ENCODE measurements at regions of chr10 and their contacts with region 1.

Region 1: GRCh38 chr10:122267849-122268737 is 3.0 kb upstream of the BTBD16 start:
- DNase-seq: peak; percentile 86
- H3K4me3 ChIP-seq: no peak overlapping the region; a peak in 1 of 4 replicates
- H3K27ac ChIP-seq: no peak overlapping the region
- H3K4me1 ChIP-seq: no peaks in the 10 kb centered on the region; a peak in 1 of 4 replicates
- H3K27me3 ChIP-seq: no peaks in the 10 kb centered on the region
- CTCF ChIP-seq: peak; percentile 91
- EP300 ChIP-seq: no peak
- RAD21 ChIP-seq: peak; percentile 61

Region 2: DNA sequence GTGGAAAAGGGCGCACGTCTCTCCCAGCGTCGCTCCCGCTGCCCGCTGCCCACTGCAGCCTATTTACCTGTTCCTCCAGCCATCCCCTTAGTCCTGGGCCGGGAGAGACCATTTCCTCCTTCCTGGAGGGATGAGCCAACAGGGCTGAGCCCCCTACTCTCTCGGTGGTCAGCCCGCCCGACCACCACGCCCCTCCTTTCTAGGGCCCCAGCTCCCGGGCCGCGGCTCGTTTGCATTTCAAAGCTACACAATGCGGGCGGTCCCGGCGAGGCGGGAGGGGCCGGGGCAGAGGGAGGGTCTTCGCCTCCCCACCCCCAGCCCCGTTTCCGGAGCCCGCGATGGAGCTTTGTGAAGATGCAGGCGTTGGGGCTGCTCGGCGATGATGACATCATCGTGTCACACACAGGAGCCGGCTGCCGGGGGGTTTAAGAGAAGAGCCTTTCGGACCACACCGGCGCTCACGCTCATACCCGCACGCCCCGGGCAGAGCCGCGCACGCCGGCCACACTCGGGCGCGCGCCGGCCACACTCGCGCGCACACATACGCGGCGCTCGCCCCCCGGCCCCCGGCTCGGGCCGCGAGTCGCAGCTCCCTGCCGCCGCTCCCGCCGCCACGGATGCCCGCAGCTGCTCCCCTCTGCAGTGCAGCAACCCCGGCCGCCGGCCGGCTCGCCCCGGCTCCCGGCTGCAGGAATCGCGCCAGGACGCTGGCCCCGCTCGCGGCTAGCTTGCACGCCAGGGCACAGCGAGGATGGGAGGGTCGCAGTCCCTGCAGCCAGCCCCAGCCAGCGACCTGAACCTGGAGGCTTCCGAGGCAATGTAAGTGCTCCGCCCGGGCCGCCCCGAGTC is 104.7 kb before region 1 on chr10:
- CTCF ChIA-PET with region 1: interaction called, 10 read pairs
- POLR2A ChIA-PET with region 1: interaction called, 3 read pairs
- DNase-seq: peak; percentile 83
- H3K4me3 ChIP-seq: peak overlapping the region; percentile 74 to 75
- H3K27ac ChIP-seq: peak overlapping the region in 1 of 2 experiments; percentile 91; a peak in 2 of 4 replicates
- H3K4me1 ChIP-seq: peaks cover 0 to 50% of the 10 kb centered on the region in 2 experiments; a peak in 2 of 4 replicates
- H3K27me3 ChIP-seq: no peaks in the 10 kb centered on the region
- CTCF ChIP-seq: no peak
- EP300 ChIP-seq: no peak
- RAD21 ChIP-seq: no peak

Region 3: GRCh38 chr10:122232769-122233168 is 35.3 kb before region 1 on chr10:
- CTCF ChIA-PET with region 1: interaction called, 11 read pairs
- POLR2A ChIA-PET with region 1: no interaction called
- DNase-seq: no peak
- H3K4me3 ChIP-seq: no peak overlapping the region
- H3K27ac ChIP-seq: peak overlapping the region; percentile 18 to 98; a peak in 2 of 4 replicates
- H3K4me1 ChIP-seq: peaks cover 0 to 71% of the 10 kb centered on the region in 2 experiments; a peak in 2 of 4 replicates
- H3K27me3 ChIP-seq: no peaks in the 10 kb centered on the region
- CTCF ChIP-seq: no peak
- EP300 ChIP-seq: no peak
- RAD21 ChIP-seq: no peak

Region 4: GRCh38 chr10:122252805-122253204 is 15.3 kb before region 1 on chr10:
- CTCF ChIA-PET with region 1: interaction called, 22 read pairs
- POLR2A ChIA-PET with region 1: no interaction called
- DNase-seq: no peak
- H3K4me3 ChIP-seq: no peak overlapping the region
- H3K27ac ChIP-seq: no peak overlapping the region
- H3K4me1 ChIP-seq: peaks cover 0 to 2% of the 10 kb centered on the region in 2 experiments; a peak in 2 of 4 replicates
- H3K27me3 ChIP-seq: no peaks in the 10 kb centered on the region
- CTCF ChIP-seq: no peak
- EP300 ChIP-seq: no peak
- RAD21 ChIP-seq: no peak

Region 5: DNA sequence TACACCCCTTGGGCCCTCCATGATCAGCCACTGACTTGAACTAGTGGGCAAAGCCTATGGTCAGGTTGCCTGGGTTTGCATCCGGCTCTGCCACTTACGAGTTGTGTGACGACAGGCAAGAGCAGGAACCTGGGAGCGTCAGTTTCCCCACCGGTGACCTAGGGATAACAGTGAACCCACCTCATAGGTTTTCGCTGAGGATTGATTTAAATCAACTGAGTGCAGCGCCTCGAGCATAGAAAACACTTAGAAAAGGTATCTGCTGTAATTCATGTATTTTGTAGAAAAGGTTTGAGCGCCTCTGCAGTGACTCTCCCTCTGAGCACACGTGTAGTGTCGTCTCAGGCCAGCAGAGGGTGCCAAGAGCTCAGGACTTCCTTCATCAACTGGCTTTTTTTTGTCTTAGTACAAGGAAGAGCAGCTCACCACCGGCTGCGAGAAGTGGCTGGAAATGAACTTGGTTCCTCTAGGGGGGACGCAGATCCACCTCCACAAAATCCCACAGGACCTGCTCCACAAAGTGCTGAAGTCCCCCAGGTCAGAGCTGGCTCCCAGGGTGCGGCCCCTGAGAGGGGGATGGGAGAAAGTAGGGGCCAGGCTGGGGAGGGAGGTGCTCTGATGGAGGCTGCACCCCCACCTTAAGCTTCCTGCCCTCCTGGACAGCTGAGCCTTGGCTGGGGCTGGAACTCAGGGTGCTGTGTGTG is 30.7 kb after region 1 on chr10:
- CTCF ChIA-PET with region 1: interaction called, 13 read pairs
- POLR2A ChIA-PET with region 1: no interaction called
- DNase-seq: peak; percentile 80
- H3K4me3 ChIP-seq: peak overlapping the region; percentile 1 to 42; a peak in 2 of 4 replicates
- H3K27ac ChIP-seq: no peak overlapping the region
- H3K4me1 ChIP-seq: no peaks in the 10 kb centered on the region; a peak in 1 of 4 replicates
- H3K27me3 ChIP-seq: no peaks in the 10 kb centered on the region; the same call in 1 of the 2 replicates
- CTCF ChIP-seq: peak; percentile 89
- EP300 ChIP-seq: no peak
- RAD21 ChIP-seq: peak; percentile 95

Region 6: DNA sequence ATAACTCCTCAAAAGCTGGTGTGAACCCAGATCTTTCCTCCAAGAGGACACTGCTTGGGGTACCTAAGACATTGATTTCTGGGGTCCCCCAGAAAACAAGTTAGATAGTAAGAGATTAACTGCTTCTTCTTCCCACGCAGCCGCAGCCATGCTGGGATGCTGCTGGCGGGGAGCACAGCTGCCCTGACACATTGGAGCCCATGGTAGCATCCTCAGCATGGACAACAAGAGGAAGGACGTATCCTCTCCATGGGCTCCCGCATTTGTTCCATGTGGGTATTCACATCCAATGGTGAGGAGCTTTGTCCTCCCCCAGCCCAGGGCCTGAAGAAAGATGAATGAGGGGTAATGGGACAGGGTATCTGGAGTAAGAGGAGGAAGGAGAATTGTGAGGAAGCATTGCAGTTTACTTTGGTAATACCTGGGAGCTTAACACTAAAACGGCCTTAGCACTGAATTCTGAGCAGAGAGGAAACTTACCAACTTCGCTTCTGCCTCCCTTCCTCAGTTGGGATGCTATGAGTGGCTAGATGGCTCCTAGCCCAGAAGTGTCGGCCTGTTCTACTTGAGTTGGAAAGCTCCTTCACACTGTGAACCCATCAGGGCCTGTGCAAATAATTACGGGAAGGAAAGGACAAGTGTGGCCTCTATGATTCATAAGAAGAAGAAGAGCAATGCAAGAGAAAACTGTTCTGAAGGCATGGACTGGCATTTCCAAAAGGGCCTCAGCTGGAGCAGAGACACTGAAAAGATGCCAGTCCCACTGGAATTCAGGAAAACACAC is 387.6 kb after region 1 on chr10:
- CTCF ChIA-PET with region 1: no interaction called
- POLR2A ChIA-PET with region 1: no interaction called
- DNase-seq: no peak
- H3K4me3 ChIP-seq: no peak overlapping the region
- H3K27ac ChIP-seq: no peak overlapping the region
- H3K4me1 ChIP-seq: peaks cover 0 to 4% of the 10 kb centered on the region in 2 experiments; a peak in 1 of 4 replicates
- H3K27me3 ChIP-seq: no peaks in the 10 kb centered on the region
- CTCF ChIP-seq: no peak
- EP300 ChIP-seq: no peak
- RAD21 ChIP-seq: no peak

Measured in SK-N-SH (cell line).